Activated T-helper 2 cell treated with anti-CD3 and anti-CD28 coated beads, Interferon-gamma antibody, Interleukin-2, Interleukin-4, amounts not matched to agents 10 μg/mL and 5 μg/mL and 100 μg/mL, durations not matched to agents 14 hours and 24 hours and 36 hours (primary cell): ENCODE measurements at regions of chr20 and their contacts with region 1.

Region 1: GRCh38 chr20:543369-544152 is at the start of gene CSNK2A1:
- DNase-seq: peak; percentile 94
- H3K4me3 Mint-ChIP-seq: peak within 1 kb of the TSS; percentile 92
- H3K27ac Mint-ChIP-seq: peak within 1 kb of the TSS; percentile 94
- H3K4me1 Mint-ChIP-seq: peaks cover 34% of the 10 kb centered on the region
- H3K27me3 Mint-ChIP-seq: peaks cover 11% of the 10 kb centered on the region
- total RNA-seq, gene CSNK2A1: 160 and 169 TPM in 2 replicates

Region 2: GRCh38 chr20:297098-297924 is 246.2 kb before region 1 on chr20 and contains the start of gene ZCCHC3:
- intact Hi-C with region 1: loop called (anchors 5 kb)
- DNase-seq: peak; percentile 85
- H3K4me3 Mint-ChIP-seq: peak within 1 kb of the TSS; percentile 99
- H3K27ac Mint-ChIP-seq: peak within 1 kb of the TSS; percentile 99
- H3K4me1 Mint-ChIP-seq: peaks cover 38% of the 10 kb centered on the region
- H3K27me3 Mint-ChIP-seq: no peaks in the 10 kb centered on the region
- total RNA-seq, gene ZCCHC3: 26.9 and 27.6 TPM in 2 replicates

Region 3: DNA sequence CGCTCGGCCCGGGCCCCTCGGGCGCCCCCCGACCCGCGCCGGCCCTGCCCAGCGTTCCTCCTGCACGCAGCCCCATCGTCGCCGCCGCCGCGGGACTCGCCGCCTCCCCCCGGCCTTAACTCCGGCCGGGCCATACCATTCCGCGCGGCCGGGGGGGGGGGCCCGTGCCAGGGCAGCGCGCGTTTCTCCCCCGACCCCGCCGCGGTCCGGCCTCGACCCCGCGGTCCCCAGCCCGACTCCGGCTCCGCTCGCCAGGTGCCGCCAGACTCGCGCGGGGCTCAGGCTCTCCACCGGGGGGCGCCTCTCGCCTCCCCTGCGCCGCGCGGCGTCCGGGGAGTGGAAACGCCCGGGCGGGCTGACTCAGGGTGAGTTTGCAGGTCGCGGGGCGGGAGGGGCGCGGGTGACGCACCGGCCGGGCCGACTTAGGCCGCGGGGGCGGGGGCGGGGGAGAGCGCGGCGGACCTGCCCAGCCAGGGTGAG is 109.6 kb after region 1 on chr20 and contains the start of gene SRXN1:
- intact Hi-C with region 1: loop called (anchors 5 kb)
- DNase-seq: peak; percentile 73
- H3K4me3 Mint-ChIP-seq: peak within 1 kb of the TSS; percentile 85
- H3K27ac Mint-ChIP-seq: peak within 1 kb of the TSS; percentile 72
- H3K4me1 Mint-ChIP-seq: peaks cover 27% of the 10 kb centered on the region
- H3K27me3 Mint-ChIP-seq: peaks cover 28% of the 10 kb centered on the region
- total RNA-seq, gene SRXN1: 20.0 and 20.4 TPM in 2 replicates